Mammary epithelial cell (primary cell): ENCODE measurements at regions of chr18 and their contacts with region 1.

Region 1: DNA sequence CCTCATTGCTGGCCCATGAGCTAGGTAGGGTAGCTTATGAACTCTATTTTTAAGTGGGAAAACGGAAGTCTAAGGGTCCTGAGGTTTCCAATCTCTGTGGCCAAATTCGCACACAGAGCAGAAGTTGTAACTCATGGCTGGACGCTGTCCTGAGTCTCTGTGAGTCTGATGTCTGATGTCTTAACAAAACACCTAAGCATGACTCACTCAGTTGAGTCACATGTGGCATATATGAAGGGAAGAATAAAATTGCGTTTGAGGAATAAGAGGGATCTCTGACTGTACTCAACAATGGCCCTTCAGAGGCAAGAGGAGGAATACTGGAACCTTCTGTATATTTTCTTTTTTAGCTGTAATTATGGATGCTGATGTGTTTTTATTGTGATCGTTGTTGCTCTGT is 569.7 kb downstream of the RIT2 start:
- DNase-seq: peak; percentile 84
- H3K4me3 ChIP-seq: no peak overlapping the region
- H3K27ac ChIP-seq: no peak overlapping the region
- H3K4me1 ChIP-seq: peaks cover 4% of the 10 kb centered on the region
- H3K27me3 ChIP-seq: no peaks in the 10 kb centered on the region
- CTCF ChIP-seq: no peak

Region 2: GRCh38 chr18:42192251-42193248 is 353.3 kb before region 1 on chr18:
- CTCF ChIA-PET with region 1: interaction called, 17 read pairs
- dilution Hi-C with region 1: no loop called
- in situ Hi-C with region 1: no loop called
- intact Hi-C with region 1: no loop called
- DNase-seq: peak; percentile 91
- H3K4me3 ChIP-seq: no peak overlapping the region
- H3K27ac ChIP-seq: peak overlapping the region; percentile 78
- H3K4me1 ChIP-seq: peaks cover 27% of the 10 kb centered on the region
- H3K27me3 ChIP-seq: no peaks in the 10 kb centered on the region
- CTCF ChIP-seq: no peak